Right cardiac atrium (tissue), 5 donors: ENCODE measurements at regions of chr3 and their contacts with region 1.

Region 1: GRCh38 chr3:45906681-45907407 is 20.5 kb downstream of the CCR9 start:
- DNase-seq: no peak
- ATAC-seq: no peak
- H3K4me3 ChIP-seq: no peak overlapping the region
- H3K27ac ChIP-seq: no peak overlapping the region
- H3K4me1 ChIP-seq: no peaks in the 10 kb centered on the region
- H3K27me3 ChIP-seq: no peaks in the 10 kb centered on the region

Region 2: GRCh38 chr3:45841757-45842491 is 64.9 kb before region 1 on chr3 and contains the start of gene LZTFL1:
- intact Hi-C with region 1: no loop called
- DNase-seq: peak; percentile 93 to 96 (median 93)
- ATAC-seq: peak; percentile 98 to 99
- H3K4me3 ChIP-seq: peak within 1 kb of the TSS; percentile 82
- H3K27ac ChIP-seq: peak within 1 kb of the TSS; percentile 60
- H3K4me1 ChIP-seq: peaks cover 2% of the 10 kb centered on the region
- H3K27me3 ChIP-seq: no peaks in the 10 kb centered on the region
- total RNA-seq, gene LZTFL1: 10.1 to 13.4 (median 11.8) TPM

Region 3: DNA sequence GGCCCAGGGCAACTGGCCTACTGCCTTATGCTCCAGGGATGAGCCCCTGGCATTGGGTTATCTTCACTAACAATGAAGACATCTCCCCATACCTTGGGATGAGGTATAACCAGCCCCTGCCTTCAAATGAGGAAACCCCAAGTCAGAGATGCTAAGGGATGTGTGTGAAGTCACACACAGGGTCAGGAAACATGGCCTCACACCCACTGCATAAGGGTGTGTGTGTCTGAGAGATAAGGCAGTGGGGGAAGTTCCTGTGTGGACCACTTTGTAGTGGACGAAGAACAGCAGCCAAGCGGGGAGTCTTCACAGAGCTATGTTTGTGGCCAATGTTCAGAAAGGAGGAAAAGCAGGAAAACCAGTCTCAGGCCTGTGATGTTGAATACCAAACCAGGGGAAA is 1596.2 kb after region 1 on chr3:
- intact Hi-C with region 1: loop called in 1 of 4 experiments (anchors 10 kb)
- DNase-seq: no peak
- ATAC-seq: no peak
- H3K4me3 ChIP-seq: no peak overlapping the region
- H3K27ac ChIP-seq: no peak overlapping the region
- H3K4me1 ChIP-seq: no peaks in the 10 kb centered on the region
- H3K27me3 ChIP-seq: no peaks in the 10 kb centered on the region